ENCODE measurements at regions of chr1 and their contacts with region 1.

Region 1: DNA sequence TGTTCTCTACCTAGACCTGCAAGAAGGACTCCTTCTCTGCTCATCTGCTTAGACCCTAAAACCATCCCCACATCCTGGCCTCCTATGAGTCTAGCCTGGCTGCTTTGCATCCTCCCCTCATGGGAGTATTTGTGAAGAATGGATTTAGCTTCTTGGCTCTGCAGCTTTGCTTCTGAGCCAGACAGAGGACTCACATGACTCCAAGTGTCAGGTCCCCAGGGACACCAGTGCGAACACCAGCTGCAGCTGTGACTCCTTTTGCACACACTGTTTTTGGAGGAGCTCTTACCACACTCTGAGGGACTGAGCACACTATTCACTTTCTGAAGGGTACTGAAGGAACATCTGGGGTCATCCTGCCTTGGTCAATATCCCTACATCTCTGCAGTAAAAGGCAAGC is 131.8 kb upstream of the SGIP1 start:
- DNase-seq: peak; percentile 92
- ATAC-seq: peak; percentile 87
- H3K4me3 ChIP-seq: no peak overlapping the region
- H3K4me3 Mint-ChIP-seq: peak overlapping the region; percentile 77
- H3K27ac ChIP-seq: peak overlapping the region; percentile 37 to 76
- H3K27ac Mint-ChIP-seq: peak overlapping the region; percentile 88
- H3K4me1 ChIP-seq: peaks cover 42 to 45% of the 10 kb centered on the region in 2 donors
- H3K4me1 Mint-ChIP-seq: peaks cover 67% of the 10 kb centered on the region
- H3K27me3 ChIP-seq: no peaks in the 10 kb centered on the region
- H3K27me3 Mint-ChIP-seq: no peaks in the 10 kb centered on the region
- CTCF ChIP-seq: no peak

Region 2: GRCh38 chr1:65979136-65980044 is 422.8 kb before region 1 on chr1:
- CTCF ChIA-PET with region 1: no interaction called
- POLR2A ChIA-PET with region 1: no interaction called
- intact Hi-C with region 1: no loop called
- DNase-seq: no peak
- ATAC-seq: no peak
- H3K4me3 ChIP-seq: no peak overlapping the region
- H3K4me3 Mint-ChIP-seq: no peak overlapping the region
- H3K27ac ChIP-seq: no peak overlapping the region
- H3K27ac Mint-ChIP-seq: no peak overlapping the region
- H3K4me1 ChIP-seq: no peaks in the 10 kb centered on the region
- H3K4me1 Mint-ChIP-seq: no peaks in the 10 kb centered on the region
- H3K27me3 ChIP-seq: no peaks in the 10 kb centered on the region
- H3K27me3 Mint-ChIP-seq: peaks cover 21% of the 10 kb centered on the region
- CTCF ChIP-seq: no peak

Region 3: GRCh38 chr1:66360285-66360724 is 41.9 kb before region 1 on chr1:
- CTCF ChIA-PET with region 1: interaction called, 14 read pairs
- POLR2A ChIA-PET with region 1: no interaction called
- intact Hi-C with region 1: loop called (anchors 5 kb)
- DNase-seq: peak; percentile 38
- ATAC-seq: peak; percentile 61
- H3K4me3 ChIP-seq: no peak overlapping the region
- H3K4me3 Mint-ChIP-seq: peak overlapping the region; percentile 78
- H3K27ac ChIP-seq: peak overlapping the region in 1 of 2 donors; percentile 78
- H3K27ac Mint-ChIP-seq: peak overlapping the region; percentile 82
- H3K4me1 ChIP-seq: peaks cover 34 to 35% of the 10 kb centered on the region in 2 donors
- H3K4me1 Mint-ChIP-seq: peaks cover 84% of the 10 kb centered on the region
- H3K27me3 ChIP-seq: no peaks in the 10 kb centered on the region
- H3K27me3 Mint-ChIP-seq: no peaks in the 10 kb centered on the region
- CTCF ChIP-seq: peak; percentile 56

Region 4: DNA sequence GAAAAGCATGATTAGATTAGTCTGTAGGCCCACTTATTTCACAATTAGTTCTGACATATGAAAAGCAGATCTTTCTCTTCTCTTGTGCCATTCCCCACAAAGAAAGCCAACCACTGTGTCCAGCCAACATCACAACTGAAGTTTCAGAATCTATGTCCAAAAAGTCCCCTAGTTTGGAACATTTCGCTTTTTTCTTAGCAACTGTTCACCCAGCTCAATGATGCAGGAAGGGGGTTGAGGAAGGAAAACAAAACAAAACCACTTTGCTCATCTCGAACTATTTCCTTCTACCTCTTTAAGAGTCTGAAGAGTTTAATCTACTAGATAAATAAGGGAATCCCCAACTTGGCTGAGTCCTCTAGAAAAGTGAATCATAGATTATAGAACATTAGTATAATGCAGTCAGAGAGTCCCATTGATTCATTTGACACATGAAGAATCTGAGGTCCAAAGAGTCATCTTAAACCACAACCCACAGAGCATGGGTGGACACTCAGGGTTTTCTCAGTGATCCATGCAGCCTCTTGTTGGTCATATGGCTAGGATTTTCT is 27.6 kb before region 1 on chr1:
- CTCF ChIA-PET with region 1: interaction called, 26 read pairs
- POLR2A ChIA-PET with region 1: interaction called, 7 read pairs
- intact Hi-C with region 1: loop called (anchors 1 kb)
- DNase-seq: peak; percentile 90
- ATAC-seq: peak; percentile 73
- H3K4me3 ChIP-seq: peak overlapping the region in 1 of 5 experiments; percentile 13
- H3K4me3 Mint-ChIP-seq: peak overlapping the region; percentile 69
- H3K27ac ChIP-seq: peak overlapping the region; percentile 83 to 90
- H3K27ac Mint-ChIP-seq: peak overlapping the region; percentile 81
- H3K4me1 ChIP-seq: peaks cover 82 to 89% of the 10 kb centered on the region in 2 donors
- H3K4me1 Mint-ChIP-seq: peaks cover 86% of the 10 kb centered on the region
- H3K27me3 ChIP-seq: no peaks in the 10 kb centered on the region
- H3K27me3 Mint-ChIP-seq: no peaks in the 10 kb centered on the region
- CTCF ChIP-seq: no peak

Region 5: DNA sequence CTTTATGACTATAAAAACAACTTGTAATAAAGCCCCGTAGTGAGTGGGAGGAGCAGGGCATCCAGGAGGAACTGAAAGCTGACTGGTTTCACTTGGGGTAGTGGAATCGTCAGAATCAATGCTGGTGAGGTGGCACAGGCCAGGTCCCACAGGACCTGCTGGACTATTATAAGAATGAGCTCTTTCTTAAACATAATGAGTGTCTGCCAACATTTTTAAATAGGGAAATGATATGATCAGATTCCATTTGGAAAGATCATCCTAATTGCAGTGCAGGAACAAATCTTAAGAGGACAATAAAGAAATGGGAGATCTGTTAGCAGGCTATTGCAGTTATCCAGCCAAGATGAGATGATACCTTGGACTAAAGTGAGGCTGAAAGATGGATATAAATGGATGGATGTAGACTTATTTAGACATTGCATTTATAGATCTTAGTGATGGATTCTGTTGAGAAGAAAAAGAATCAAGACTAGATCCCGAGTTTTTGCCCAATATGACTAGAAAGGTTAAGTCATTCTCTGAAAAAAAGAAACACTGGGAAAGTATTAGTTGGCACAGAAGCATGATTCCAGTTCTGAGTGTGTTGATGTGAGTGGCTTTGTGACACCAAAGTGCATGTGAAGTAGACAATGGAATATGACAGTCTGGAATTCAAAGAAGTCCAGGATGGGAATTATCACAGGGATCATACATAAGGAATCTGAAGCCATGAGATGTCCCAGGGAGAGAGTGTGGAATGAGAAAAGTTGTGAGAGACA is 21.6 kb before region 1 on chr1:
- CTCF ChIA-PET with region 1: interaction called, 26 read pairs
- POLR2A ChIA-PET with region 1: interaction called, 18 read pairs
- intact Hi-C with region 1: loop called (anchors 1 kb)
- DNase-seq: peak; percentile 91
- ATAC-seq: peak; percentile 99
- H3K4me3 ChIP-seq: peak overlapping the region in 2 of 5 experiments; percentile 13 to 39
- H3K4me3 Mint-ChIP-seq: peak overlapping the region; percentile 74
- H3K27ac ChIP-seq: peak overlapping the region; percentile 67 to 83
- H3K27ac Mint-ChIP-seq: peak overlapping the region; percentile 85
- H3K4me1 ChIP-seq: peaks cover 67 to 68% of the 10 kb centered on the region in 2 donors
- H3K4me1 Mint-ChIP-seq: peaks cover 75% of the 10 kb centered on the region
- H3K27me3 ChIP-seq: no peaks in the 10 kb centered on the region
- H3K27me3 Mint-ChIP-seq: no peaks in the 10 kb centered on the region
- CTCF ChIP-seq: no peak

Region 6: GRCh38 chr1:66413136-66413837 is 11.1 kb after region 1 on chr1:
- CTCF ChIA-PET with region 1: interaction called, 4 read pairs
- POLR2A ChIA-PET with region 1: no interaction called
- intact Hi-C with region 1: loop called (anchors 2 kb)
- DNase-seq: no peak
- ATAC-seq: no peak
- H3K4me3 ChIP-seq: no peak overlapping the region
- H3K4me3 Mint-ChIP-seq: no peak overlapping the region
- H3K27ac ChIP-seq: no peak overlapping the region
- H3K27ac Mint-ChIP-seq: no peak overlapping the region
- H3K4me1 ChIP-seq: no peaks in the 10 kb centered on the region
- H3K4me1 Mint-ChIP-seq: peaks cover 10% of the 10 kb centered on the region
- H3K27me3 ChIP-seq: no peaks in the 10 kb centered on the region
- H3K27me3 Mint-ChIP-seq: no peaks in the 10 kb centered on the region
- CTCF ChIP-seq: no peak

Region 7: GRCh38 chr1:67110352-67110751 is 708.2 kb after region 1 on chr1:
- CTCF ChIA-PET with region 1: no interaction called
- POLR2A ChIA-PET with region 1: no interaction called
- intact Hi-C with region 1: loop called (anchors 5 kb)
- DNase-seq: peak; percentile 61
- ATAC-seq: peak; percentile 34
- H3K4me3 ChIP-seq: peak overlapping the region in 1 of 5 experiments; percentile 26
- H3K4me3 Mint-ChIP-seq: peak overlapping the region; percentile 14
- H3K27ac ChIP-seq: no peak overlapping the region
- H3K27ac Mint-ChIP-seq: no peak overlapping the region
- H3K4me1 ChIP-seq: peaks cover 27 to 38% of the 10 kb centered on the region in 2 donors
- H3K4me1 Mint-ChIP-seq: peaks cover 40% of the 10 kb centered on the region
- H3K27me3 ChIP-seq: no peaks in the 10 kb centered on the region
- H3K27me3 Mint-ChIP-seq: no peaks in the 10 kb centered on the region
- CTCF ChIP-seq: no peak